T-cell (primary cell): ENCODE measurements at regions of chr7 and their contacts with region 1.

Region 1: GRCh38 chr7:149414745-149415390 is 46.0 kb downstream of the ZNF777 start:
- DNase-seq: peak in 30 of 35 experiments; percentile 7 to 59 (median 34)
- ATAC-seq: peak; percentile 52 to 82 (median 75)
- H3K4me3 ChIP-seq: peak overlapping the region; percentile 5 to 18
- H3K4me3 Mint-ChIP-seq: peak overlapping the region; percentile 49 to 74 (median 73)
- H3K27ac ChIP-seq: no peak overlapping the region
- H3K27ac Mint-ChIP-seq: peak overlapping the region; percentile 50 to 51
- H3K4me1 ChIP-seq: peaks cover 2 to 8% of the 10 kb centered on the region in 2 experiments
- H3K4me1 Mint-ChIP-seq: peaks cover 3 to 15% (median 14%) of the 10 kb centered on the region in 3 donors
- H3K27me3 ChIP-seq: peaks cover 3 to 28% of the 10 kb centered on the region in 2 experiments
- H3K27me3 Mint-ChIP-seq: peaks cover 25 to 42% of the 10 kb centered on the region in 2 donors

Region 2: DNA sequence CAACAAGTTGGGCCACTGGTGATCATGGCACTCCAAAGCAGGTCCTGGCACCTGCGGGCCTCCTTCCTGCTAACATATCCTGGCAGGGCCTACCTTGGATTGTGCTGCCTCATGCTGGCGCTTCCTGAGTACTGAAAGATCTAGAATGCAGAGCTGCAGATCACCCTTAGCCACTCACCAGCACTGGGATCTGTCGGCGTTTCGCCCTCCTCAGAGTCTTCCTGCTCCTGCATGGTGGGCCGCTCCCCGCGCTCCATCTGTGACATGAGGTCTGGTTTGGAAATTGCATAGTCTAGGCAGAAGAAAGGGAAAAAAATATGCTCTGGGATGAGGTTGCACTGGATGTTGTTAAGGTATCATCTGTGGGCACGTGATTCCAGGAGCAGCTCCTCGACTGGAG is 36.0 kb after region 1 on chr7:
- CTCF ChIA-PET with region 1: no interaction called
- POLR2A ChIA-PET with region 1: no interaction called
- DNase-seq: no peak
- ATAC-seq: no peak
- H3K4me3 ChIP-seq: no peak overlapping the region
- H3K4me3 Mint-ChIP-seq: no peak overlapping the region
- H3K27ac ChIP-seq: no peak overlapping the region
- H3K27ac Mint-ChIP-seq: no peak overlapping the region
- H3K4me1 ChIP-seq: no peaks in the 10 kb centered on the region
- H3K4me1 Mint-ChIP-seq: peaks cover 6 to 7% (median 6%) of the 10 kb centered on the region in 3 donors
- H3K27me3 ChIP-seq: no peaks in the 10 kb centered on the region
- H3K27me3 Mint-ChIP-seq: no peaks in the 10 kb centered on the region

Region 3: GRCh38 chr7:149569025-149569725 is 154.3 kb after region 1 on chr7:
- CTCF ChIA-PET with region 1: no interaction called
- POLR2A ChIA-PET with region 1: interaction called in 1 of 2 experiments, 16 read pairs
- DNase-seq: no peak
- ATAC-seq: no peak
- H3K4me3 ChIP-seq: no peak overlapping the region
- H3K4me3 Mint-ChIP-seq: no peak overlapping the region
- H3K27ac ChIP-seq: no peak overlapping the region
- H3K27ac Mint-ChIP-seq: no peak overlapping the region
- H3K4me1 ChIP-seq: no peaks in the 10 kb centered on the region
- H3K4me1 Mint-ChIP-seq: peaks cover 20 to 28% (median 20%) of the 10 kb centered on the region in 3 donors
- H3K27me3 ChIP-seq: no peaks in the 10 kb centered on the region
- H3K27me3 Mint-ChIP-seq: no peaks in the 10 kb centered on the region

Region 4: GRCh38 chr7:149742075-149742701 is 327.3 kb after region 1 on chr7:
- CTCF ChIA-PET with region 1: no interaction called
- POLR2A ChIA-PET with region 1: no interaction called
- DNase-seq: peak in 30 of 35 experiments; percentile 9 to 70 (median 36)
- ATAC-seq: peak; percentile 65 to 85 (median 76)
- H3K4me3 ChIP-seq: peak overlapping the region; percentile 5 to 53
- H3K4me3 Mint-ChIP-seq: peak overlapping the region; percentile 67 to 84 (median 70)
- H3K27ac ChIP-seq: no peak overlapping the region
- H3K27ac Mint-ChIP-seq: no peak overlapping the region
- H3K4me1 ChIP-seq: peaks cover 2 to 12% of the 10 kb centered on the region in 2 experiments
- H3K4me1 Mint-ChIP-seq: peaks cover 10% of the 10 kb centered on the region in 3 donors
- H3K27me3 ChIP-seq: peaks cover 2 to 59% of the 10 kb centered on the region in 2 experiments
- H3K27me3 Mint-ChIP-seq: peaks cover 36 to 47% of the 10 kb centered on the region in 2 donors